ENCODE measurements at regions of chr17 and their contacts with region 1.

Region 1: DNA sequence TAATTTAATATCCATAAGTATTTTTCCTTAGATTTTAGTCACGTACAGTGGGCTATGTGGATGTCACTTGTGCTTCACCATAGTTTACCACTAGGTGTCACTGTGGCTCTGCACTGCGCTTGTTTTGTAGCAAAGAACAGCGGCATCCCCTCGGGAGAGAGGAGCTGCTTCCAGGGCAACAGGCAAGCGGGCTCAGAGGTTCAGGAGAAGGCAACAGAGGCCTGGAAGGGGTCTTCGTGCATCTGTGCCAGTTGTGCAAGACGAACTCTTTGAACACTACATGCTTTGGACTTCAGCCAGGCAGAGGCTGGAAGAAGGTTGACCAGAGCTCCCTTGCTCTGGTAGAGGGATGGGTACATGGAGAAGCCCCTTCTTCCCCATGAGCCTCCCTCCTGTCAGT is 20.6 kb downstream of the CYB561 start:
- DNase-seq: peak; percentile 78
- ATAC-seq: peak; percentile 98
- H3K4me3 ChIP-seq: no peak overlapping the region
- H3K27ac ChIP-seq: no peak overlapping the region
- H3K4me1 ChIP-seq: no peaks in the 10 kb centered on the region
- H3K27me3 ChIP-seq: no peaks in the 10 kb centered on the region
- CTCF ChIP-seq: peak; percentile 97 to 99 (median 98)
- POLR2A ChIP-seq: no peak
- RAD21 ChIP-seq: peak; percentile 100

Region 2: DNA sequence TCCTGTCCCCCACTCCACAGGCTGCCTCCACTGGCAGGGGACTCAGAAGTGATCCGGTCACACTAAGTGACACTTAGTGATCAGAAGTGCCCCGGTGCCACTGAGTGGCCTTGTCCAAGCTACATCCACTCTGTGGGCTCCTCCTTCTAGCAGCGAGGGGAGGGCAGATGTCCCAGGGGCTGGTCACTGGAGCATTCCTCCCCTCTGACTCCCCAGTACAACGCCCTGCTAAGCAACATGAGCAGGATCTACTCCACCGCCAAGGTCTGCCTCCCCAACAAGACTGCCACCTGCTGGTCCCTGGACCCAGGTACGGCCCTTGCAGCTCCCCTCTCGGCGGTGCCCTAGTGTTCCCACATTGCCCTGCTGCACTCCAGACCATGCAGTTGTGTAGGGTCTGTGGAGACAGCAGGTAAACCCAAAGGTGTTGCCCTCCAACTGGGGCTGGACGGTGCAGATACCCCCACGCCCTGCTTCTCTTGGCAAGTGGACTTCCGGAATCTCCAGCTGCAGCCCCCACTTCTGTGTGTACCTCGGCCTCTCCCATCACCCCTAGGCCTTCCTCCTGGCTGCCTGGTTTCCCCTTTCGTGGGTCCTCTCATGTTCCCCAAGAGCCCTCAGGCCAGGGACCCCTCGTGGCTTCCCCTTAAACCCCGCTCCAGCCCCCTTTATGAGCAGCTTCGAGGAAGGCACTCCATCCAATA is 53.5 kb after region 1 on chr17:
- CTCF ChIA-PET with region 1: interaction called, 92 read pairs
- POLR2A ChIA-PET with region 1: interaction called, 6 read pairs
- RAD21 ChIA-PET with region 1: interaction called, 19 to 21 read pairs
- intact Hi-C with region 1: loop called (anchors 1 kb)
- DNase-seq: peak; percentile 93
- ATAC-seq: peak; percentile 89
- H3K4me3 ChIP-seq: peak overlapping the region in 1 of 2 experiments; percentile 5; a peak in 2 of 4 replicates
- H3K27ac ChIP-seq: peak overlapping the region; percentile 5; the same call in 1 of the 2 replicates
- H3K4me1 ChIP-seq: peaks cover 13 to 41% of the 10 kb centered on the region in 2 experiments
- H3K27me3 ChIP-seq: no peaks in the 10 kb centered on the region
- CTCF ChIP-seq: peak; percentile 97 to 99 (median 99)
- POLR2A ChIP-seq: no peak
- RAD21 ChIP-seq: peak; percentile 97

Region 3: GRCh38 chr17:63611354-63611753 is 185.9 kb after region 1 on chr17:
- CTCF ChIA-PET with region 1: interaction called, 76 read pairs
- POLR2A ChIA-PET with region 1: no interaction called
- RAD21 ChIA-PET with region 1: interaction called, 9 to 17 read pairs
- intact Hi-C with region 1: loop called (anchors 1 kb)
- DNase-seq: no peak
- ATAC-seq: no peak
- H3K4me3 ChIP-seq: no peak overlapping the region
- H3K27ac ChIP-seq: no peak overlapping the region
- H3K4me1 ChIP-seq: no peaks in the 10 kb centered on the region
- H3K27me3 ChIP-seq: no peaks in the 10 kb centered on the region
- CTCF ChIP-seq: no peak
- POLR2A ChIP-seq: no peak
- RAD21 ChIP-seq: no peak

Region 4: GRCh38 chr17:63675607-63676413 is 250.3 kb after region 1 on chr17:
- CTCF ChIA-PET with region 1: interaction called, 16 read pairs
- POLR2A ChIA-PET with region 1: no interaction called
- RAD21 ChIA-PET with region 1: interaction called in 1 of 2 experiments, 5 read pairs
- intact Hi-C with region 1: no loop called
- DNase-seq: peak; percentile 76
- ATAC-seq: peak; percentile 86
- H3K4me3 ChIP-seq: peak overlapping the region in 1 of 2 experiments; percentile 11; a peak in 2 of 4 replicates
- H3K27ac ChIP-seq: peak overlapping the region; percentile 77
- H3K4me1 ChIP-seq: peaks cover 24 to 26% of the 10 kb centered on the region in 2 experiments
- H3K27me3 ChIP-seq: no peaks in the 10 kb centered on the region
- CTCF ChIP-seq: no peak
- POLR2A ChIP-seq: no peak
- RAD21 ChIP-seq: 0 out of 2 replicates have a peak, but pooled peaks have one; percentile 9

Region 5: GRCh38 chr17:63834431-63835166 is 409.1 kb after region 1 on chr17:
- CTCF ChIA-PET with region 1: interaction called, 10 read pairs
- POLR2A ChIA-PET with region 1: no interaction called
- RAD21 ChIA-PET with region 1: no interaction called
- intact Hi-C with region 1: loop called (anchors 1 kb)
- DNase-seq: peak; percentile 83
- ATAC-seq: peak; percentile 87
- H3K4me3 ChIP-seq: no peak overlapping the region
- H3K27ac ChIP-seq: peak overlapping the region; percentile 22
- H3K4me1 ChIP-seq: peaks cover 15 to 23% of the 10 kb centered on the region in 2 experiments
- H3K27me3 ChIP-seq: no peaks in the 10 kb centered on the region
- CTCF ChIP-seq: peak; percentile 94 to 99 (median 97)
- POLR2A ChIP-seq: no peak
- RAD21 ChIP-seq: no peak; the same call in 1 of the 2 replicates